ENCODE measurements at regions of chr1 and their contacts with region 1.

Region 1: DNA sequence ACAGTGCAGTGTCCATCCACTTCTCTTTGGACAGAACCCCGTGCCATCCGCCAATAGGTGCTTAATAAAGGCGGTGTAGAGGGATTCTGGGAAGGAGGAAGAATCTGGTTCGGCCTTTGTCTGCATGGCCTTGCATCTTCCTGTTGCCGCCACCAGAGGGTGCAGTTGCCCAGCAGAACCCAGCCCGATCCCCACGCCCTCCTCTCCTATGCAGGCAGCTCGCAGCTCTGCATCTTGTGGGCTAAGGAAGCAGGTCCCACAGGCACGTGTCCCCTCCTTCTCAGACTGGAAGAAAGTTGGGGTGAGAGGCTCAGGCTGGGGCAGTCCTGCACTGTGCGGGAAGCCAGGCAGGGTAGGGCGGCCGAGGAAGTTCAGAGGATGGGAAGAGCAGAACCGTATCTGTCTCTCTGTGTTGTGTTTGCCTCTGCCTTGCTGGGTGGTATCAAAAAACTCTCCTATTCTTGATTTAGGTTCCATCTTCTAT is 20.8 kb downstream of the NAV1 start:
- DNase-seq: peak; percentile 89
- H3K4me3 Mint-ChIP-seq: no peak overlapping the region
- H3K27ac Mint-ChIP-seq: peak overlapping the region; percentile 35
- H3K4me1 Mint-ChIP-seq: peaks cover 48% of the 10 kb centered on the region
- H3K27me3 Mint-ChIP-seq: no peaks in the 10 kb centered on the region
- CTCF ChIP-seq: peak; percentile 100

Region 2: GRCh38 chr1:200938955-200939354 is 620.8 kb before region 1 on chr1:
- CTCF ChIA-PET with region 1: no interaction called
- POLR2A ChIA-PET with region 1: no interaction called
- intact Hi-C with region 1: no loop called
- DNase-seq: peak; percentile 48
- H3K4me3 Mint-ChIP-seq: no peak overlapping the region
- H3K27ac Mint-ChIP-seq: no peak overlapping the region
- H3K4me1 Mint-ChIP-seq: no peaks in the 10 kb centered on the region
- H3K27me3 Mint-ChIP-seq: no peaks in the 10 kb centered on the region
- CTCF ChIP-seq: no peak

Region 3: DNA sequence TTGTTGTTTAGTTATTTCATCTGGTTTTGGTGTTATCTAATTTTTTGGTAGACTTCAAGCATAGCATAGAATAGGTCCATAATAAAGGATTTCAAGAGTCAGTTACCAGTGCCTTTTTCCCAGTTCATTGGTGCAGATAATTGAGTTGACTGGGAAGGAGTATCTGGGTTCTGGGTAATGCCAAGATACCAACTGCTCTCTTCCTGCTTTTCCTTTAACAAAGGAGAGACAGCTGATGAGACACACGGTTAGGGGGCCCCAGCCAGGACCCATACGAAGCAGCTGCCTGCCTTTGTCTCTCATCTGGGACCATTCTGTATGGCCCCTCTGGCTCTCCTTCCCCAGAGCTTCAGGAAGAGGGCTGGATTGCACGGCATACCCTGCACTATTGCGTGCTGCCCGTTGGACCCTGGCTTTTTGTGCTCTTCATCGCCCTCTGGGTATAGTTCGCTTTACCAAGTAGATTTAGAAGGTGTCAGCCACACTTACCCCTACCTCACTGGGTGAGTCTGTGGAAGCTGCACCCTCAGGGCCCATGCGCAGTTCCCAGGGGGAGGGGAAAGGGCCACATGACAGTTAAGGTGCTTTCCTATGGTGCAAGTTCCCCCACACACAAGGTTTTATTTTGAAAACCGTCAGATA is 13.7 kb before region 1 on chr1:
- CTCF ChIA-PET with region 1: interaction called, 37 read pairs
- POLR2A ChIA-PET with region 1: interaction called, 4 read pairs
- intact Hi-C with region 1: no loop called
- DNase-seq: no peak
- H3K4me3 Mint-ChIP-seq: no peak overlapping the region
- H3K27ac Mint-ChIP-seq: peak overlapping the region; percentile 39
- H3K4me1 Mint-ChIP-seq: no peaks in the 10 kb centered on the region
- H3K27me3 Mint-ChIP-seq: no peaks in the 10 kb centered on the region
- CTCF ChIP-seq: peak; percentile 5

Region 4: DNA sequence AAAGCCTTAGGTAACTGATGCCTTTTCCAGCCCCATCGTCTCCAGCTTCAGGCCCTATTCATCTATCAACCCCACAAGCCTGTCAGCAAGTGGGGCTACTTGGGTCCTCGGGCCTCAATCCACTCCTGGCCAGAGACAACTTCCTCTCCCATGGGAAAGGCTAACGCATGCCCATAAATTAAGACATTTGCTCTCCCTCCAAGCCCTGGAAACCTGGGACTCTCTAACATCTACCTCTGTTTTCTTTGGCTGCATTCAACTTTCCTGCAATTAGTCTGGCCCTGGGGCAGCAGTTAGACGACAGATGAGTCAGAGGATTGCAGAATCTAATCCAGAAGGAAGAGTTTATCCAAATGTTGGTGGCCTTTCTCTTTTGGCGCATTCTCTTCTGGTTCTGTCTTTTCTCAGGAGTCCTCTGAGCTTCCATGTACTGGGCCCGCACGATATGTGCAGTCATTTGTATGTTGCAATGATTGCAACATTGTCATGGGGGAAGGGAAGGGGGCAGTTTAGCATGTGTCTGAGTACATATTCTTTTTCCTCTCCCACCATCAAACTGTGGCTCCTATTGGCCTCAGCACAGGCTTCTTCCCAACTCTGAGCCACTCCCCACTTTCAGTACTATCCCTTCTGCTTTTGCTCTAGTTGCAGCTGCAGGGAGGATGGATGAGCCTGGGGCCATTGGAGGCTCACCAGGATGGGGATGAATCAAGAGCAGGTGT is 33.6 kb after region 1 on chr1:
- CTCF ChIA-PET with region 1: interaction called, 21 read pairs
- POLR2A ChIA-PET with region 1: interaction called, 3 read pairs
- intact Hi-C with region 1: loop called (anchors 1 kb)
- DNase-seq: peak; percentile 100
- H3K4me3 Mint-ChIP-seq: peak overlapping the region; percentile 39
- H3K27ac Mint-ChIP-seq: peak overlapping the region; percentile 21
- H3K4me1 Mint-ChIP-seq: peaks cover 59% of the 10 kb centered on the region
- H3K27me3 Mint-ChIP-seq: peaks cover 10% of the 10 kb centered on the region
- CTCF ChIP-seq: no peak

Region 5: DNA sequence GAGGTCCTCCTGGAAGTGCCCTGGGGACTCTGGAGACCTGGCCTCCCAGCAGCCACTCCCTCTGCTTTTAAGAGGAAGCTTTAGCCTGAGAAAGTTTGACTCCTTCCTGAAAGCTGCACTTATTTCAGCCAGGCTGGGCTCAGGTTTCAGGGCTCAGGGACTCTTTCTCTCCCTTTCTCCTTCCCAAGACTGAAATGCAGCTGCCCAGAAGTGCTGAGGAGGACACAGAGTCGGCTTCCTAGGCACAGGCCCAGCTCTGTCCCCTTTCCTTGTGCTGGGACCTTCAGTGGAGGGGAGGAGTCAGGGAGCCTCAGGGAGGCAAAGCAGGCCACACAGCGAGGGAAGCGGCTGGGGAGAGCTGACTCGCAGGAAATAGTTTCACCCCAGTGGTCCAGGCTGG is 116.5 kb after region 1 on chr1:
- CTCF ChIA-PET with region 1: interaction called, 15 read pairs
- POLR2A ChIA-PET with region 1: interaction called, 3 read pairs
- intact Hi-C with region 1: no loop called
- DNase-seq: peak; percentile 42
- H3K4me3 Mint-ChIP-seq: no peak overlapping the region
- H3K27ac Mint-ChIP-seq: no peak overlapping the region
- H3K4me1 Mint-ChIP-seq: peaks cover 6% of the 10 kb centered on the region
- H3K27me3 Mint-ChIP-seq: no peaks in the 10 kb centered on the region
- CTCF ChIP-seq: no peak

Region 6: GRCh38 chr1:201703621-201704439 is 144.1 kb after region 1 on chr1:
- CTCF ChIA-PET with region 1: interaction called, 779 read pairs
- POLR2A ChIA-PET with region 1: interaction called, 21 read pairs
- intact Hi-C with region 1: loop called (anchors 1 kb)
- DNase-seq: peak; percentile 90
- H3K4me3 Mint-ChIP-seq: no peak overlapping the region
- H3K27ac Mint-ChIP-seq: peak overlapping the region; percentile 16
- H3K4me1 Mint-ChIP-seq: peaks cover 25% of the 10 kb centered on the region
- H3K27me3 Mint-ChIP-seq: no peaks in the 10 kb centered on the region
- CTCF ChIP-seq: peak; percentile 100

Region 7: DNA sequence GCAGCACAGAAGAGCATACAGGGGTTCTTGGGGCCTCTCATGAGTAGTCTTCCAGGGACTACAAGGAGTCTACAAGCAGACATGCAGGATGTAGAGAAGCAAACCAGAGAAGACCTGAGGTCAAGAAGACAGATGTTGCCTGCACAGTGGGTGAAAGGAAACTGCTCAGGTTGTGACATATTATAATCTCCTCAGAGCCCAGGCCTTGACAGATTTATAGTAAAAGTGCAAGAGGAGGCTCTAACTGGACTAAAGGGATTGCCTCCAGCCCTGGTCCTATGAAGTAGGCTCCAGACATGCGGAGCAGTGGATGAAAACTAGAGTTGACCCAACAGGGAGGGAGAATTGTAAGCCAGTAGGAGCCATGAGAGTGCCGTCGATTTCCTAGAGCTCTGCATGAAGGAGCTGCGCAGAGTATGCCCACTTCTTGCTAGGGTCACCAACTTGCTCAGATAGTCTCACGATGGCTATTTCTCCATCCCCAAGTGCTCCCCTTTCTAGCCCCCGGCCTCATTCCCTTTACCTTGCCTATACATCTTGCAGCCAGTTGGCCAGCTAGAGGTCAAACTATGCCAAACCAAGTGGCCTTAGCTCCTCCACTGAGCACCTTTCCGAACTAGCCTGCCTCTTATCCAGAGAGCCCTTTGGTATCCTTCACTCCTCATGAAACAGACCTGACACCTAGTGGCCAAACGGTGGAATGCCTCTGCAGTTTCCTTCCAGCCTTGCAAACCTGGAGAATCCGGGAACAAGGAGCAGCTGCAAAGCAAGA is 233.0 kb after region 1 on chr1:
- CTCF ChIA-PET with region 1: interaction called, 288 read pairs
- POLR2A ChIA-PET with region 1: interaction called, 5 read pairs
- intact Hi-C with region 1: loop called (anchors 1 kb)
- DNase-seq: peak; percentile 96
- H3K4me3 Mint-ChIP-seq: no peak overlapping the region
- H3K27ac Mint-ChIP-seq: no peak overlapping the region
- H3K4me1 Mint-ChIP-seq: peaks cover 32% of the 10 kb centered on the region
- H3K27me3 Mint-ChIP-seq: no peaks in the 10 kb centered on the region
- CTCF ChIP-seq: peak; percentile 100

Region 8: DNA sequence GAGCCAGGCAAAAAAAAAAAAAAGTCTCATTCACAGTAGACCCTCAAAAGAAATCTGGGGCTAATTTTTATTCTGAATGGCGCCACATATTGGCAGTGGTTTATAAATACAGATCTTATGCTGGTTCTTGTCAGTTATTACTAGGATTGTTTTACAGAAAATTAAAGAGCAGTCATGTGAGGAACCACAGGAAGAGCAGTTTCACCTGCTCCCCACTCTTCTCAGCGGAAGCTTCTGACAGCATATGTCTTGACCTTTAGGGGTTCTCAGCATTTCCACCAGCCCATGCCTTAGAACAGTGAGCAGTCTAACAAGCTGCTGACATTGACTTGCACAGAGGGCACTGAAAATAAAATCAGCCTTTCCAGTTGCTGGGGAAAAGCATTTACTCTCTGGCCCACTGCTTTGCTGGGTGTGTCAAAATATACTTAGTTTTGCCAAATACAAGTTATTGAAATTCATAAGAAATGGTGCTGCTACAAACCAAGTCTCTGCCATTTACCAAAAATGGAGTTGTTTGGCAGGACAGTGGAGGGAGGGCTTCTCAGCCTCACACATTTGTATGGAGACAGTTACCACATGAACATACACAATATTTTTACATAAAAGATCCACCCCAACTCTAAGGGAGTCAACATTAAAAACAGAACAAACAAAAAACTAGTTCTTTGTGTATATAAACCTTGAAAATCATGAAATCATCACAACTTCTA is 1006.3 kb after region 1 on chr1:
- CTCF ChIA-PET with region 1: no interaction called
- POLR2A ChIA-PET with region 1: no interaction called
- intact Hi-C with region 1: no loop called
- DNase-seq: no peak
- H3K4me3 Mint-ChIP-seq: no peak overlapping the region
- H3K27ac Mint-ChIP-seq: no peak overlapping the region
- H3K4me1 Mint-ChIP-seq: peaks cover 6% of the 10 kb centered on the region
- H3K27me3 Mint-ChIP-seq: no peaks in the 10 kb centered on the region
- CTCF ChIP-seq: no peak